SK-N-SH (cell line): ENCODE measurements at regions of chr21 and their contacts with region 1.

Region 1: GRCh38 chr21:40254540-40255465 is 387.6 kb downstream of the PCP4 start:
- DNase-seq: peak; percentile 60
- H3K4me3 ChIP-seq: no peak overlapping the region
- H3K27ac ChIP-seq: peak overlapping the region in 1 of 2 experiments; percentile 92; a peak in 2 of 4 replicates
- H3K4me1 ChIP-seq: peaks cover 0 to 31% of the 10 kb centered on the region in 2 experiments; a peak in 2 of 4 replicates
- H3K27me3 ChIP-seq: no peaks in the 10 kb centered on the region
- CTCF ChIP-seq: no peak
- EP300 ChIP-seq: peak in 1 of 2 experiments; percentile 97; a peak in 2 of 4 replicates
- RAD21 ChIP-seq: peak; percentile 45

Region 2: GRCh38 chr21:39924577-39925308 is 330.1 kb before region 1 on chr21:
- CTCF ChIA-PET with region 1: no interaction called
- POLR2A ChIA-PET with region 1: no interaction called
- DNase-seq: no peak
- H3K4me3 ChIP-seq: no peak overlapping the region
- H3K27ac ChIP-seq: no peak overlapping the region
- H3K4me1 ChIP-seq: no peaks in the 10 kb centered on the region
- H3K27me3 ChIP-seq: no peaks in the 10 kb centered on the region
- CTCF ChIP-seq: no peak
- EP300 ChIP-seq: no peak
- RAD21 ChIP-seq: no peak

Region 3: DNA sequence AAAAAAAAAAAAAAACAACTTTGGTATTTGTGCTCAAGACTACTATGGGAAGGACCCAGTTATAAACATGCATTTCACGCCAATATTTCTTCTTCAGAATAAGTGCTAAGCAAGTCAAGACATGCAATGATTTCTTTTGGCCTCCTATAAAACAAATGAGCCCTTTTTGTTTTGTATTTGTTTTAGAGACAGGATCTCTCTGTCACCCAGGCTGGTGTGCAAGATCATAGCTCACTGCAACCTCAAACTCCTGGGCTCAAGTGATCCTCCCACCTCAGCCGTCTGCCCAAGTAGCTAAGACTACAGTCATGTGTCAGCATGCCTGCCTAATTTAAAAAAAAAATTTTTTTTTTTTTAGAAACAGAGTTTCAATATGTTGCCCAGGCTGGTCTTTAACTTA is 38.9 kb before region 1 on chr21:
- CTCF ChIA-PET with region 1: no interaction called
- POLR2A ChIA-PET with region 1: no interaction called
- DNase-seq: no peak
- H3K4me3 ChIP-seq: no peak overlapping the region
- H3K27ac ChIP-seq: no peak overlapping the region
- H3K4me1 ChIP-seq: no peaks in the 10 kb centered on the region
- H3K27me3 ChIP-seq: no peaks in the 10 kb centered on the region
- CTCF ChIP-seq: no peak
- EP300 ChIP-seq: no peak
- RAD21 ChIP-seq: no peak

Region 4: GRCh38 chr21:40270047-40270446 is 15.2 kb after region 1 on chr21:
- CTCF ChIA-PET with region 1: interaction called, 14 read pairs
- POLR2A ChIA-PET with region 1: interaction called, 12 read pairs
- DNase-seq: no peak
- H3K4me3 ChIP-seq: no peak overlapping the region
- H3K27ac ChIP-seq: no peak overlapping the region
- H3K4me1 ChIP-seq: peaks cover 0 to 22% of the 10 kb centered on the region in 2 experiments; a peak in 2 of 4 replicates
- H3K27me3 ChIP-seq: no peaks in the 10 kb centered on the region
- CTCF ChIP-seq: no peak
- EP300 ChIP-seq: no peak
- RAD21 ChIP-seq: no peak

Region 5: GRCh38 chr21:40318434-40318833 is 63.6 kb after region 1 on chr21:
- CTCF ChIA-PET with region 1: no interaction called
- POLR2A ChIA-PET with region 1: no interaction called
- DNase-seq: no peak
- H3K4me3 ChIP-seq: no peak overlapping the region
- H3K27ac ChIP-seq: no peak overlapping the region
- H3K4me1 ChIP-seq: no peaks in the 10 kb centered on the region
- H3K27me3 ChIP-seq: no peaks in the 10 kb centered on the region
- CTCF ChIP-seq: no peak
- EP300 ChIP-seq: no peak
- RAD21 ChIP-seq: no peak